Heart right ventricle (tissue), 16 donors: ENCODE measurements at regions of chr16 and their contacts with region 1.

Region 1: GRCh38 chr16:82263521-82264143 is 93.6 kb upstream of the MPHOSPH6 start:
- DNase-seq: peak; percentile 19 to 58
- ATAC-seq: peak; percentile 83 to 96 (median 88)
- H3K4me3 ChIP-seq: no peak overlapping the region
- H3K27ac ChIP-seq: no peak overlapping the region
- H3K4me1 ChIP-seq: peaks cover 0 to 17% (median 0%) of the 10 kb centered on the region in 9 donors
- H3K27me3 ChIP-seq: peaks cover 0 to 4% (median 0%) of the 10 kb centered on the region in 7 donors
- CTCF ChIP-seq: peak; percentile 82 to 96 (median 92)

Region 2: GRCh38 chr16:82344157-82344556 is 80.5 kb after region 1 on chr16:
- intact Hi-C with region 1: loop called (anchors 1 to 5 kb)
- DNase-seq: no peak
- ATAC-seq: peak in 7 of 8 donors; percentile 70 to 90 (median 78)
- H3K4me3 ChIP-seq: no peak overlapping the region
- H3K27ac ChIP-seq: no peak overlapping the region
- H3K4me1 ChIP-seq: no peaks in the 10 kb centered on the region
- H3K27me3 ChIP-seq: no peaks in the 10 kb centered on the region
- CTCF ChIP-seq: peak in 8 of 9 donors; percentile 24 to 64 (median 59)

Region 3: DNA sequence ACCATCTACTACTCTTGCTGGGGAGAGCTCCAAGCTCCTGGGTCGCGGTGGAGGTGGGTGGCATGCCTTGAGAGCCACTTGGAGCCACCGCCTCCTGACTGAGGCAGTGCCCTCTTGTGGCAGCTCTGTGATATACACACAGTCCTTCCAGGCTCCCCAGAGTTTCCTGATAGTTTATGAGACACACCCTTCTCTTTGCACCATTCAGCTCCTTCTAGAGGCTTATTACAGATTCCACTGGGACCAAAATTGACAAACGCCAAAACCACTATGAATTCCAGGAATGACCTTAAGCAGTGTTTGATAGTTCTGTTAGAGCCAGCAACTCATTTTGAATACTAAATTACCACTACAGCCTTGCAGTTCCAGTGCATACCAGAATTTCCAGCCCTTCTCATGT is 193.1 kb after region 1 on chr16:
- intact Hi-C with region 1: loop called in 8 of 10 experiments (anchors 5 to 10 kb)
- DNase-seq: peak; percentile 26 to 28
- ATAC-seq: peak in 7 of 8 donors; percentile 38 to 85 (median 75)
- H3K4me3 ChIP-seq: no peak overlapping the region
- H3K27ac ChIP-seq: no peak overlapping the region
- H3K4me1 ChIP-seq: no peaks in the 10 kb centered on the region
- H3K27me3 ChIP-seq: peaks cover 0 to 14% (median 8%) of the 10 kb centered on the region in 7 donors
- CTCF ChIP-seq: peak; percentile 39 to 81 (median 73)

Region 4: DNA sequence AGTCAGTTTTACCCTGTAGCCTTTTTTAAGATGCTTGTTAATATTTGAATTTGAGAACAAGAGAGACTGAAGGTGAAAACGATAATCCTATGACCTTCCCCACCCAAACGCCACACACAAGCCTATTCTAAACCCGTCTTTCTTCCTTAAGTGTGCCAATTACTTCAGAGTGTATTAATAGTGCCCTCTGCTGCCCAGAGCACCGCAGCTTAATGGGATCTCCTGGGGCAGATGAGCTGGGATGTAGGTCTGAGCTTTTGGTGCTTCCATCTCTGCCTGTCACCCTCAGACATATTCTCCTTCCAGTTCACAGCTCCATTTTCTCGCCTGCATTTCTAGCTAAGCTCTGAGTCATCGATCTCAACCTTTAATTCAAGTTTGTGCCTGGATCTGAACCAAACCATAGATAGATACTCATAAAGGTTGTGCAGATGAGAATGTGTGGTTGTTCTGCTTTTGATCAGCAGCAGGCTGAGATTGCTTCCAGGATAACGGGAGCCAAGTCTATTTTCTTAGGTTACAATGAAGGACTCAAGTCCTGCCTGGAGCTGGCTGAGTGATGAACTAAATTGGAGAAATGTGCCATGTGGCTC is 316.8 kb after region 1 on chr16:
- intact Hi-C with region 1: loop called in 6 of 10 experiments (anchors 5 to 10 kb)
- DNase-seq: peak in 1 of 2 donors; percentile 15
- ATAC-seq: peak; percentile 47 to 81 (median 62)
- H3K4me3 ChIP-seq: no peak overlapping the region
- H3K27ac ChIP-seq: no peak overlapping the region
- H3K4me1 ChIP-seq: peaks cover 0 to 5% (median 0%) of the 10 kb centered on the region in 9 donors
- H3K27me3 ChIP-seq: no peaks in the 10 kb centered on the region
- CTCF ChIP-seq: peak in 7 of 9 donors; percentile 32 to 63 (median 49)

Region 5: GRCh38 chr16:82598771-82599170 is 335.1 kb after region 1 on chr16:
- intact Hi-C with region 1: no loop called
- DNase-seq: no peak
- ATAC-seq: no peak
- H3K4me3 ChIP-seq: no peak overlapping the region
- H3K27ac ChIP-seq: no peak overlapping the region
- H3K4me1 ChIP-seq: peaks cover 0 to 2% (median 0%) of the 10 kb centered on the region in 9 donors
- H3K27me3 ChIP-seq: peaks cover 0 to 4% (median 0%) of the 10 kb centered on the region in 7 donors
- CTCF ChIP-seq: no peak

Region 6: DNA sequence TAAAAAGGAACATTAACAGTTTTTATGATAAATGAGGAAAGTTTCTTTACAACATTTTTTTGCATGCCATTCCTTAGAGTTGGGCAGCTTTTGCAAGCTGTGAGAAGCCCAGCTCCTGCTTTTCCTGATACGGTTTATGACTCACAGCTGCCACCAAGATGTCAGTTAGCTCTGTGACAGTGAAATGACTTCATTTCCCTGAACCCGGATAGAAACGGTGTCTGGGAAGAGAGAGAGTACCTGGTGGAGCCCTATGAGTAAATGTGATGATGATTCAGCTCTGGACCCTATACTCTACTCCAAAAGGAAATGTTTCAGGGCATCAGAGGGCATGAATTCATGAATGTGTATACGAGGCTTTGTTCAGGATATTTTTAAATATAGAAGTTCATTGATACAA is 1177.9 kb after region 1 on chr16:
- intact Hi-C with region 1: loop called in 4 of 10 experiments (anchors 5 to 10 kb)
- DNase-seq: no peak
- ATAC-seq: peak in 3 of 8 donors; percentile 22 to 91 (median 52)
- H3K4me3 ChIP-seq: no peak overlapping the region
- H3K27ac ChIP-seq: peak overlapping the region in 1 of 10 donors; percentile 18
- H3K4me1 ChIP-seq: peaks cover 0 to 5% (median 0%) of the 10 kb centered on the region in 9 donors
- H3K27me3 ChIP-seq: no peaks in the 10 kb centered on the region
- CTCF ChIP-seq: peak in 1 of 9 donors; percentile 14